ENCODE measurements at regions of chr12 and their contacts with region 1.

Region 1: GRCh38 chr12:103965590-103966504 is at the start of gene TDG:
- DNase-seq: peak; percentile 95 to 100
- ATAC-seq: peak; percentile 99
- H3K4me3 ChIP-seq: peak within 1 kb of the TSS; percentile 79
- H3K27ac ChIP-seq: peak within 1 kb of the TSS; percentile 93 to 94
- H3K4me1 ChIP-seq: peaks cover 29% of the 10 kb centered on the region
- CTCF ChIP-seq: no peak
- EP300 ChIP-seq: no peak
- POLR2A ChIP-seq: peak; percentile 71
- RAD21 ChIP-seq: peak in 1 of 2 experiments; percentile 31; a peak in 1 of 5 replicates
- polyA plus RNA-seq, gene TDG: 48.2 and 65.4 TPM in 2 replicates

Region 2: DNA sequence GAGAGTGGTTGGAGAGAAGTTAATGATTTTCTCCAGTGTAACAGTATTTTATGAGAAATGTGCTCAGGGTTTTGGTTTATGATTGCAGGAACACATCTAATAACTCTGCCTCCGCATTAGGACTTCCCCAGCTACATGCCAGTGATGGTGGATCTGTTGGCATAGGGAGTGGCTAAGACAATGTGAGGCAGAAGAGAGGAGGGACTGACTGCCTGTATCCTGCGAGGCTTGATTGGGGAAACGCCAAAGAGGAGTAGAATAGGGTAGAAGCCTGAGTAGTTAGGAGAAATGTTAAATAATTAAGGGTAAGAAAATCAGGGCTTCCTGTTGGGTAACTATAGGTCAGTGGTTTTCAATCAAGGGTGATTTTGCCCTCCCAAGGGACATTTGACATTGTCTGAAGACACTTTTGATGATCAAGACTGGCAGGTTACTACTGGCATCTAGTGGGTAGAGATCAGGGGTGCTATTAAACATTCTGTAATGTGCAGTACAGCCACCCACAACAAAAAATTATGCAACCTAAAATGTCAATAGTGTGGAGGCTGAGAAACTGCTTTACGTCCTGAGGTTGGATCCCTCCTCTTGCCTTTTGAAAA is 12.6 kb after region 1 on chr12:
- CTCF ChIA-PET with region 1: interaction called, 4 read pairs
- POLR2A ChIA-PET with region 1: interaction called, 14 read pairs
- DNase-seq: no peak
- ATAC-seq: peak; percentile 43 to 45; a peak in 4 of 6 replicates
- H3K4me3 ChIP-seq: no peak overlapping the region
- H3K27ac ChIP-seq: no peak overlapping the region
- H3K4me1 ChIP-seq: no peaks in the 10 kb centered on the region
- CTCF ChIP-seq: no peak
- EP300 ChIP-seq: no peak
- POLR2A ChIP-seq: no peak
- RAD21 ChIP-seq: no peak

Region 3: DNA sequence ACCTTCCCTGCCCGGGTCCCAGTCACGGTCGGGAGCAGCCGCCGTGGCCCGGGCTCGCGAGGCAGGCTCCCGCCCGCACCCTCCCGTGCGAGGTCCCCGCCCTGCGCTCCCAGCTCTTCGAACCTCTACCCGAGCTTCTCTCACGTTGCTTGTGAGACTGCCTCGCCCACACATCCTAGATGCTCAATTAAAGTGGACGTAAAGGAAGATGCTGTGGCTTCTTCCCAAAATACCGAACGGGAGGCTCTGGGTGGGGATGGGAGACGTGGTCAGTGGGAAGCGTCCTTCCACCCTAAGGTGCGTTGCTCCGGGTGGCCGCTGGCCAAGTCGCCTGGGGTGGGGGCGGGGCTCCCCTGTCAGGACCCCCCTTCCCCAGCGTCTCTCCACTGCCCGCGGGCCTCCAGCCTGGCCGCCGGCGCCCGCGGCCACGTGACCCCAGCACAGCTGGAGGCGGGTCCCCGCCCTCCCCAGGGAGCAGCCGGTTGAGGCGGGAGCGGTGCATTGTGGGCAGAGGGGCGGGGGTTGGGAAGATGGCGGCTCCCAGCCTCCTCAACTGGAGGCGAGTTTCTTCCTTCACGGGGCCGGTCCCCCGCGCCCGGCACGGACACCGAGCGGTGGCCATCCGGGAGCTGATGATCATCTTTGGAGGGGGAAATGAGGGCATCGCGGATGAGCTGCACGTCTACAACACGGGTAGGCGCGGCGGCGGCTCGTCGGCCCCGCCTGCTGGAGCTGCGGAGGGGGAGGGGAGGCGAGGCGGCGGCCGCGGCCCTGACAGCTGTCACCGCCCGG is 98.4 kb after region 1 on chr12 and contains the start of gene HCFC2:
- CTCF ChIA-PET with region 1: interaction called, 6 read pairs
- POLR2A ChIA-PET with region 1: interaction called, 30 read pairs
- DNase-seq: peak; percentile 82 to 97
- ATAC-seq: peak; percentile 91 to 97
- H3K4me3 ChIP-seq: peak within 1 kb of the TSS; percentile 77
- H3K27ac ChIP-seq: peak within 1 kb of the TSS; percentile 78 to 91
- H3K4me1 ChIP-seq: peaks cover 13% of the 10 kb centered on the region
- CTCF ChIP-seq: no peak
- EP300 ChIP-seq: no peak
- POLR2A ChIP-seq: peak; percentile 81
- RAD21 ChIP-seq: 0 out of 5 replicates have a peak, but pooled peaks of 1 of the 2 experiments have one; percentile 15
- polyA plus RNA-seq, gene HCFC2: 10.0 and 10.6 TPM in 2 replicates

Region 4: DNA sequence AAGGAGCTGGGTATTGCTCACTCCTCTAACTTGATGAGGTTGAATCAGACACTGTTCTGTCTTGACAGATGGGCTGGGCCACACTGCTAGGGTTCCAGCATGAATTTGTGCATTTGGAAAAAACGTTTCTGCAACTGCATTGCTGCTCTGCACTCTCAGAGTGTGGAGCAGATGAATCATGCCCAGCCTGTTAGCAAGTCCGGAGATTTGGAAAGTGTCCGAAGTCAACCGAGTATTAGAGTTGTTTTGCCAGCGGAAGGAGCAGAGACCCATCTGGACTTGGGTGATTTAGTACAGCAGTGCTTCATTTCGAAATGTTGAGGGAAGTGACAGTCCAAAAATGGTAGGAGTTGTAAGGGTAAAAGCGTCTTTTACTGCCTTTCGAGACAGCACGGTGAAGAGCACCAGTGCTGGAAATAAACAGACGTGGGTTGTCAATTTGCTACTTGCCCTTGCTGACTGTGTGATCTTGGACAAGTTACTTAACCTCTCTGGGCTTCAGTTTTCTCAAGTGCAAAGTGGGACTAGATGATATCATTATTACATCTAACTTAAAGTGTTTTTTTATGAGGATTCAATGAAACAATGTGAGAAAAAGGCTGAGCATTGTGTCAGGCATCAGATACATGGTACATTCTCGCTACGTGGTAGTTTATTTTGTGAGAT is 630.4 kb after region 1 on chr12:
- CTCF ChIA-PET with region 1: no interaction called
- POLR2A ChIA-PET with region 1: no interaction called
- DNase-seq: peak in 1 of 2 experiments; percentile 28
- ATAC-seq: peak; percentile 41 to 58; a peak in 3 of 6 replicates
- H3K4me3 ChIP-seq: no peak overlapping the region
- H3K27ac ChIP-seq: peak overlapping the region; percentile 10 to 68; a peak in 4 of 6 replicates
- H3K4me1 ChIP-seq: peaks cover 56% of the 10 kb centered on the region
- CTCF ChIP-seq: no peak
- EP300 ChIP-seq: no peak
- POLR2A ChIP-seq: no peak
- RAD21 ChIP-seq: no peak